Activated CD4-positive, alpha-beta memory T cell treated with anti-CD3 and anti-CD28 coated beads for 36 hours (primary cell): ENCODE measurements at regions of chr16 and their contacts with region 1.

Region 1: GRCh38 chr16:57519796-57520360 is 16.5 kb downstream of the CCDC102A start:
- DNase-seq: peak; percentile 85
- H3K4me3 Mint-ChIP-seq: no peak overlapping the region
- H3K27ac Mint-ChIP-seq: no peak overlapping the region
- H3K4me1 Mint-ChIP-seq: peaks cover 3% of the 10 kb centered on the region
- H3K27me3 Mint-ChIP-seq: no peaks in the 10 kb centered on the region

Region 2: DNA sequence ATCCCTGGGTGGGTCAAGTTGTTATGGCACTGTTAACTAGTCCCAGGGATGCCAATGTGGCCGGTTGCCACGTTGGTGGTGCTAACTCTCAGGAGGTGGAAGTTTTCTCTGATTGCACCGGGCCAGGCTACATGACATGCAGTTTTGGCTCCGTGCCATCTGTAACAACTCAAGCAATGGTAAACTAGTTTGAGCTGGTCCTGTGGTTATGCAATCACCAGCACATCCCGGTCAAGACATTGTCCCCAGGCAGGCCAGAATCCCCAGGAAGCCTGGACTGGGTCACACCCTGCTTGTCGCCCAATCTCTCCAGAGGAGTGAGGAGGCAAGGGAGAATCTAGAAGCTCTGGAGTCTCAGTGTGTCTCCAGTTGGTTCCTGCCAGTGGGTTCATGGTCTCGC is 125.4 kb before region 1 on chr16:
- CTCF ChIA-PET with region 1: no interaction called
- POLR2A ChIA-PET with region 1: no interaction called
- intact Hi-C with region 1: no loop called
- DNase-seq: no peak
- H3K4me3 Mint-ChIP-seq: no peak overlapping the region
- H3K27ac Mint-ChIP-seq: no peak overlapping the region
- H3K4me1 Mint-ChIP-seq: no peaks in the 10 kb centered on the region
- H3K27me3 Mint-ChIP-seq: peaks cover 4% of the 10 kb centered on the region

Region 3: GRCh38 chr16:57422026-57422944 is 97.6 kb before region 1 on chr16:
- CTCF ChIA-PET with region 1: interaction called, 103 read pairs
- POLR2A ChIA-PET with region 1: no interaction called
- intact Hi-C with region 1: loop called (anchors 1 kb)
- DNase-seq: no peak
- H3K4me3 Mint-ChIP-seq: no peak overlapping the region
- H3K27ac Mint-ChIP-seq: no peak overlapping the region
- H3K4me1 Mint-ChIP-seq: peaks cover 6% of the 10 kb centered on the region
- H3K27me3 Mint-ChIP-seq: no peaks in the 10 kb centered on the region

Region 4: GRCh38 chr16:57462209-57462977 is 57.5 kb before region 1 on chr16 and contains the start of gene POLR2C:
- CTCF ChIA-PET with region 1: interaction called, 17 read pairs
- POLR2A ChIA-PET with region 1: interaction called, 4 read pairs
- intact Hi-C with region 1: no loop called
- DNase-seq: peak; percentile 95
- H3K4me3 Mint-ChIP-seq: peak within 1 kb of the TSS; percentile 100
- H3K27ac Mint-ChIP-seq: peak within 1 kb of the TSS; percentile 98
- H3K4me1 Mint-ChIP-seq: peaks cover 34% of the 10 kb centered on the region
- H3K27me3 Mint-ChIP-seq: no peaks in the 10 kb centered on the region
- total RNA-seq, gene POLR2C: 52.5 to 57.0 TPM

Region 5: DNA sequence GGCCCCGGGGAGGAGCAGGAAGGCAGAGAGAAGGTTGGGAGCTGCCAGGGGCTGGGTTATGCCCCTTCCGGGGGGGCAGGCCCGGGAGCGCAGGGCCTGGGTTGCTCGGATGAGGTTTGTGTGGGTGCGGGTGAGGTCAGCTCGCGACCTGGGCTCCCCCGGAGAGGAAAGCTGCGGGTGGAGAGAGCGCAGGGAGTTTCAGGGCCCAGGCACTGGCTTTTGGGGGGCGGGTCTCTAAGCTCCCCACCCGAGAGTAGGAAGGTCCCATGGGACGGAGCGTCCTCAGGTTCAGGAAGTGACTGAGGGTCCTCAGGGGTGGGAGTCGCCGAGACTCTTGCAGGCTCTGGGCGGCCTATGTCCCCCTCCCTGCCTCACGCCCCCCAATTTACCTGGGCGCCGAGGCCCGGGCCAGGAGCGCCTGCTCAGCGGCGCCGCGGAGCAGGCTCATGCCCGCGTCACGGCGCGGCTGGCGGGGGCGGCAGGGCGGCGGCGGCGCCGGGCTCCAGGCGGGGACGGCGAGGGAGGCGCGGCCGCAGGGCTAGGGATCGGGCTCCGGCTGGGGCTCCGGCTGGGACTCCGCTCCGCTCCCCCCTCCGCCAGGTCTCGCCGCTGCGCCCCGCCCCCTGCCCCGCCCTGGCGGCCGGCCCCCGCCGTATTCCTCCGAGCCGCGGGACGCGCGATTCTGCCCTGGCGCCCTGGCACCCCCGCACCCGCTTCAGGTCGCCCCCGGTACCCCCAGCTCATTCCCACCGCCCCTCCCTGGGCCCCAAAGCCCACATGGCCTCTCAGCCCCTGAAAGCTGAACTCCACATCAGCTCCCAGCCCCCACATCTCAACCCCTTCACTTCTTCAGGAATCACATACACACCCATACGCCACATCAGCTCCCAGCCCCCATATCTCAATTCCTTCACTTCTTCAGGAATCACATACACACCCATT is 33.7 kb before region 1 on chr16 and contains the start of gene DOK4:
- CTCF ChIA-PET with region 1: interaction called, 27 read pairs
- POLR2A ChIA-PET with region 1: no interaction called
- intact Hi-C with region 1: no loop called
- DNase-seq: peak; percentile 85
- H3K4me3 Mint-ChIP-seq: peak within 1 kb of the TSS; percentile 79
- H3K27ac Mint-ChIP-seq: peak within 1 kb of the TSS; percentile 64
- H3K4me1 Mint-ChIP-seq: peaks cover 11% of the 10 kb centered on the region
- H3K27me3 Mint-ChIP-seq: no peaks in the 10 kb centered on the region
- total RNA-seq, gene DOK4: 5.5 to 7.1 TPM

Region 6: GRCh38 chr16:57535680-57536305 is 15.9 kb after region 1 on chr16:
- CTCF ChIA-PET with region 1: interaction called, 26 read pairs
- POLR2A ChIA-PET with region 1: no interaction called
- intact Hi-C with region 1: no loop called
- DNase-seq: peak; percentile 97
- H3K4me3 Mint-ChIP-seq: peak overlapping the region; percentile 86
- H3K27ac Mint-ChIP-seq: peak overlapping the region; percentile 94
- H3K4me1 Mint-ChIP-seq: peaks cover 72% of the 10 kb centered on the region
- H3K27me3 Mint-ChIP-seq: no peaks in the 10 kb centered on the region